Tibial artery (tissue), 4 donors: ENCODE measurements at regions of chr1 and their contacts with region 1.

Region 1: GRCh38 chr1:32612189-32612881 is 38.0 kb downstream of the ZBTB8OS start:
- DNase-seq: peak; percentile 82 to 90
- H3K4me3 ChIP-seq: peak overlapping the region; percentile 46 to 54
- H3K27ac ChIP-seq: peak overlapping the region in 1 of 2 donors; percentile 41
- H3K4me1 ChIP-seq: peaks cover 0 to 10% (median 0%) of the 10 kb centered on the region in 4 donors
- H3K27me3 ChIP-seq: no peaks in the 10 kb centered on the region
- CTCF ChIP-seq: no peak

Region 2: GRCh38 chr1:32454726-32455125 is 157.6 kb before region 1 on chr1:
- intact Hi-C with region 1: loop called (anchors 10 kb)
- DNase-seq: no peak
- H3K4me3 ChIP-seq: no peak overlapping the region
- H3K27ac ChIP-seq: no peak overlapping the region
- H3K4me1 ChIP-seq: no peaks in the 10 kb centered on the region
- H3K27me3 ChIP-seq: peaks cover 0 to 15% of the 10 kb centered on the region in 2 donors
- CTCF ChIP-seq: no peak